Colonic mucosa (tissue), 4 donors: ENCODE measurements at regions of chr10 and their contacts with region 1.

Region 1: GRCh38 chr10:46555713-46556514 is 544 bp downstream of the GPRIN2 start:
- DNase-seq: peak; percentile 76
- H3K4me3 ChIP-seq: peak overlapping the region; percentile 63
- H3K27ac ChIP-seq: peak overlapping the region; percentile 5
- H3K4me1 ChIP-seq: peaks cover 30% of the 10 kb centered on the region
- H3K27me3 ChIP-seq: peaks cover 19% of the 10 kb centered on the region
- CTCF ChIP-seq: no peak

Region 2: DNA sequence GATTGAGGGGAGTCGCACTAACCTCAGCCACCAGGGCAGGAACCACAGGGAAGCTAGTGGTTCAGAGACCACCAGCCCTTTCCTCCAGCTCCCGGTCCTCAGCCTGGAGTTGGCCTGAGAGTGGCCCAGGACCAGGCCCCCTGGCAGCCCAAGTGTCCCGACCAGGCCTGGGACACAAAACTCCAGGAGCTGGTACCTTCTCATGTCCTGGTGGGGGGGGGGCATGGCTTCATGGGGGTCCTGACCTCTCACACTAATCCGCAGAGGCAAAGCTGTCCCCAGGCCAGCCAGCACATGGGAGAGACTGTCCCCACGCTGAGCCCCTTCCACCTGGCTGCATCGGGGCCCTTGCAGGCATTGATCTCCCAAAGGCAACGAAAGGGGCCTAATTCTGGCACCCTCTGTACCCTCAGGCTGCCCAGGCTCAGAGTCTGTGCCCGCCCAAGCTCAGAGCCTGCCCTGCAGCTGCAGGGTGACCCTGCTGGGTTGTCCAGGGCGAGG is 27.7 kb before region 1 on chr10:
- intact Hi-C with region 1: loop called (anchors 2 kb)
- DNase-seq: no peak
- H3K4me3 ChIP-seq: no peak overlapping the region
- H3K27ac ChIP-seq: no peak overlapping the region
- H3K4me1 ChIP-seq: peaks cover 4% of the 10 kb centered on the region
- H3K27me3 ChIP-seq: no peaks in the 10 kb centered on the region
- CTCF ChIP-seq: no peak